ENCODE measurements at regions of chr19 and their contacts with region 1.

Region 1: DNA sequence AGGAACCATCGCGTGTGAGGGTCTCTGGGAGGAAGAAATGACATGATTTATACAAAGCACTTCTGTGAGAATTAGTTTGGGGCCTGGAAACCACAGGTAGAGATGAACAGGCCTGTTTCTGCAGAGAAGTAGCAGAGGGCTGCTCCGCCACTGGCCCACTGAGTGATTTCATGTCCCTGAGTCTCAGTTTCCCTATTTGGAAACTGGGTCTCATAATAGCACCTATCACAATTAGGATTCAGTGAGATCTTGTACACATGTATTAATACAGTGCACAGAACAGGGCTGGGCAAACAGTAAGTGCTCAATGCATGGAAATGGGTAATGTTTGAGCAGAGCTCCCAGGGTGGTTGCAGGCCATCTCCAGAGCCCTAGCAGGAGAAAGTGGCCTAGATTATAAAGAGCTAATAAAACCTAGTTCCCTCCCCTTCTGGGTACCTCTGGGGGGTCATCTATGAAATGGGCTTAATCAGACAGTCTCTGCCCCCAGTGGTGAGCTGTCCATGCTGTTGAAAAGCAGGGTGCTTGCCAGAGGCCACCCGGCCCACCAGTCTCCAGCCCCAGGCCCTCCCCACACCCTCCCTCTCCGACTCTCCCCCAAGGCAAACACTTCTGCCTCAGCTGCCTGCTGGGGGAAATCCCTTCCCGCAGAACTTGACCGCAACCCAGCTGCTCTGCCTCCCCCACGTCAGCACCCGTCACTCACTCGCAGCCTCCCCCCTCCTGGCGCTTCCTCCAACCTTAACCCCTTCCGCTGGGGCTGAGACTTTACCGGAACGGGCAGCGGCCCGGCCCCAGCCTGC is 4.5 kb downstream of the BCL3 start:
- DNase-seq: peak; percentile 96
- H3K4me3 ChIP-seq: peak overlapping the region; percentile 59
- H3K27ac ChIP-seq: peak overlapping the region; percentile 84
- H3K27me3 ChIP-seq: no peaks in the 10 kb centered on the region
- CTCF ChIP-seq: no peak; the same call in 1 of the 2 replicates

Region 2: GRCh38 chr19:44626048-44626624 is 126.9 kb before region 1 on chr19:
- CTCF ChIA-PET with region 1: interaction called, 10 read pairs
- POLR2A ChIA-PET with region 1: no interaction called
- DNase-seq: peak; percentile 97
- H3K4me3 ChIP-seq: no peak overlapping the region
- H3K27ac ChIP-seq: peak overlapping the region; percentile 92
- H3K27me3 ChIP-seq: no peaks in the 10 kb centered on the region
- CTCF ChIP-seq: no peak

Region 3: DNA sequence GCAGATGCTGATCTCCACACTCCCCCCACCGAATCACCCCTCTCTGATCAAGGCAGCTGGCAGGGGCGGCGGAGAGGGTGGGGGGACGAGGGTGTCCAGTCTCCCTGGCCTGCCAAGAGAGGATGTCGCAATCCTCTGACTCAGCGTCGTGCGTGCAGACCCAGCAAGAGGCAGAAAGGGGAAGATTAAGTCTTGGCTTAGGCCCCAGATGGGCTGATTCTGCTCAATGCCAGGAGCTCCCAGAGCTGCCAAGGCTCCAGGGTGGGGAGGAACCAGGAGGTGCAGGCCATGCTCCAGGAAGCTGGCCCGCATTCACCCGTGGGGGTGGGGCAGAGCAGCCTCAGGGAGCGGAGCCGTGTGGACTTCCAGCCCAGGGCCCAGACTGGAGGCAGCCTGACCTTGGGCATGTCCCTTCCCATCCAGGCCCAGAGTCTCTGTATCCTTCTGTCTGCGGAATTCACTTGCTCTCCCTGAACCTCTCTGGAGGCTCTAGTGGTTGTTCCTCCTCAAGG is 11.1 kb before region 1 on chr19:
- CTCF ChIA-PET with region 1: interaction called, 4 read pairs
- POLR2A ChIA-PET with region 1: interaction called, 18 read pairs
- DNase-seq: peak; percentile 98
- H3K4me3 ChIP-seq: no peak overlapping the region
- H3K27ac ChIP-seq: peak overlapping the region; percentile 87
- H3K27me3 ChIP-seq: no peaks in the 10 kb centered on the region
- CTCF ChIP-seq: no peak

Region 4: GRCh38 chr19:44800461-44800860 is 47.4 kb after region 1 on chr19:
- CTCF ChIA-PET with region 1: no interaction called
- POLR2A ChIA-PET with region 1: no interaction called
- DNase-seq: peak; percentile 33
- H3K4me3 ChIP-seq: no peak overlapping the region
- H3K27ac ChIP-seq: no peak overlapping the region
- H3K27me3 ChIP-seq: no peaks in the 10 kb centered on the region
- CTCF ChIP-seq: peak; percentile 97

Measured in AG04450 (cell line).